Naive thymus-derived CD8-positive, alpha-beta T cell (primary cell): ENCODE measurements at regions of chr1 and their contacts with region 1.

Region 1: DNA sequence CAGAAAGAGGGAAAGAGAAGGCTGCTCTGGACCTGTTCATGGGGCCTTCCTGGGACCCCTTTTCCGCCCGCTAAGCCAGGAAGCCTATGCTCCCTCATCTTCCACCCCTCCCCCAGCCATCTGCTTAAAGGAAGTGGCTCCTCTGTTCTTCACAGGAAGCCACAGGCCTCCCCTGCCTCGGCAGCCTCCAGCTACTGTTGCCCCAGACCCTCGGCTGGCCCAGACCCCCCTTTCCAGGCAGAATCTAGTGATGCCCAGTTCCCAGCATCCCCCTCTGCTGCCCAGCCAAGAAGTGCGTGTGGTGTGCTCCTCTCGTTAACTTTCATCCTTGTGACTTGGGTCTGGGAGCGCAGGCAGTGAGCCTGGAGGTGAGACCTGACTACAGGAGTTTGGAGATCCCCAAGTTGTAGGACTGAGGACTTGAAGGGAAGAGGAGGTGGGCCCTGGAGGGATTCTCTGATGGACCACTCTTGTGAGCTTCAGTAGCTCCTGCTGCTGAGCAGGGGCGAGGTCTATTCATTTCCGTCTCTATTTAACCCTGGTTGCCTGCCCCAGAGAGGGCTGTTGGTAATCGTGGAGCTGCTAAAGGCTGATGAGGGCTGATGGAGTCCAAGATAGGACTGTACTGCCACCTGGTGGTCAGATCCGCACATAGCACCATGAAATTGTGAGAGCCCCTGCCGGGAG is 9.1 kb downstream of the IFI6 start:
- DNase-seq: peak; percentile 79 to 95 (median 90)
- ATAC-seq: peak; percentile 75
- H3K4me3 Mint-ChIP-seq: peak overlapping the region; percentile 76 to 92 (median 88)
- H3K27ac Mint-ChIP-seq: peak overlapping the region; percentile 90 to 100 (median 99)
- H3K4me1 Mint-ChIP-seq: peaks cover 36 to 58% (median 50%) of the 10 kb centered on the region in 4 donors
- H3K27me3 Mint-ChIP-seq: no peaks in the 10 kb centered on the region

Region 2: GRCh38 chr1:27603681-27604578 is 58.9 kb before region 1 on chr1 and contains the start of gene AHDC1:
- POLR2A ChIA-PET with region 1: interaction called, 263 read pairs
- DNase-seq: peak; percentile 85 to 95 (median 90)
- ATAC-seq: peak; percentile 85 to 87
- H3K4me3 Mint-ChIP-seq: peak within 1 kb of the TSS; percentile 89 to 96 (median 92)
- H3K27ac Mint-ChIP-seq: peak within 1 kb of the TSS; percentile 73 to 98 (median 91)
- H3K4me1 Mint-ChIP-seq: peaks cover 26 to 55% (median 37%) of the 10 kb centered on the region in 4 donors
- H3K27me3 Mint-ChIP-seq: no peaks in the 10 kb centered on the region
- polyA plus RNA-seq, gene AHDC1: 0.57 to 2.4 (median 1.0) TPM

Region 3: GRCh38 chr1:27624467-27625178 is 38.2 kb before region 1 on chr1:
- POLR2A ChIA-PET with region 1: interaction called, 263 read pairs
- DNase-seq: no peak
- ATAC-seq: peak; percentile 21 to 33
- H3K4me3 Mint-ChIP-seq: no peak overlapping the region
- H3K27ac Mint-ChIP-seq: no peak overlapping the region
- H3K4me1 Mint-ChIP-seq: peaks cover 20 to 46% (median 30%) of the 10 kb centered on the region in 4 donors
- H3K27me3 Mint-ChIP-seq: no peaks in the 10 kb centered on the region

Region 4: GRCh38 chr1:27632387-27633297 is 30.2 kb before region 1 on chr1:
- POLR2A ChIA-PET with region 1: interaction called, 17 read pairs
- DNase-seq: no peak
- ATAC-seq: peak; percentile 45 to 66
- H3K4me3 Mint-ChIP-seq: peak overlapping the region; percentile 57 to 85 (median 76)
- H3K27ac Mint-ChIP-seq: peak overlapping the region; percentile 23 to 92 (median 85)
- H3K4me1 Mint-ChIP-seq: peaks cover 41 to 81% (median 75%) of the 10 kb centered on the region in 4 donors
- H3K27me3 Mint-ChIP-seq: no peaks in the 10 kb centered on the region

Region 5: DNA sequence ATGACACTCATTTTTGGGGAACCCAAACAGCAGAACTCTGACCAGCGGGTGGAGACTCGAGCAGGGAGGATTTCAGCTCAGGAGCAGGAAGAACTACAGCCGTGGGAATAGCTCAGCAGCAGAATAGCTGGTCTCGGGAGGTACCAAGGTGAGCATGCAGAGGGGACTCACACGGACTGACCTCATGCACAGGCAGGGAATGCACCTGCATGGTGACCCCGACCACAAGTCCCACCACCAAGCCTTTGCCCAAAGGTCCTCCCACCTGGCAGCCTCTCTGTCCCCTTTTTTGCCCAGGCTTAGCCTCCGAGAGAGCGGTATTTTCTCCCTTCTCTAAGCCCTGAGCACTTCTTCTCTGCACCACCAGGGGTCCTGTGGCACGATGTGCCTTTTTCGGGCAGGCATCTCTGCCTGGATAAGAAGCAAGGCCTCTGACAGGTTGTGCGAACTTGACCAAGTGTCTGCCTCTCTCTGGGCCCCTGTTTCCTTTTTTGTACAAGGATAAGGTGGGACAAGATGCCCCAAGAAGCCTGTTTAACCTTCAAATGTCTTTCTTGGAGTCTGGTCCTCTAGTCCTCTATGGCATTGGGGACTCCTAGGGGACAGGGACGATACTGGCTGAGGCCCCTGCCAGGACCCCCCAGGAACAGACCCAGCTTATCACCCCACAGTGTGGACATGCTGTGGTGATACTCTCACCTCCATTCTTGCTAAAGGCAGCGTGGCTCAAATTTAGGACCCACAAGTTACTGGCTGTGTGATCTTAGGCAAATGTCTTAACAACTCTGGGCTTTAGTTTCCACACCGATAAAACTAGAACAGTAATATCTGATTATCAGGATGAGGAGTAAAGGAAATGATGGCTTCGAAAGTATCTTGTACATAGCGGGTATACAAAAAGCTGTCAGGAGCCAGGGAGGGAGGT is 18.9 kb before region 1 on chr1:
- POLR2A ChIA-PET with region 1: interaction called, 65 read pairs
- DNase-seq: peak; percentile 51 to 87 (median 68)
- ATAC-seq: peak; percentile 99 to 100
- H3K4me3 Mint-ChIP-seq: peak overlapping the region in 2 of 10 donors; percentile 8 to 27
- H3K27ac Mint-ChIP-seq: peak overlapping the region; percentile 25 to 89 (median 74)
- H3K4me1 Mint-ChIP-seq: peaks cover 14 to 30% (median 21%) of the 10 kb centered on the region in 4 donors
- H3K27me3 Mint-ChIP-seq: no peaks in the 10 kb centered on the region

Region 6: DNA sequence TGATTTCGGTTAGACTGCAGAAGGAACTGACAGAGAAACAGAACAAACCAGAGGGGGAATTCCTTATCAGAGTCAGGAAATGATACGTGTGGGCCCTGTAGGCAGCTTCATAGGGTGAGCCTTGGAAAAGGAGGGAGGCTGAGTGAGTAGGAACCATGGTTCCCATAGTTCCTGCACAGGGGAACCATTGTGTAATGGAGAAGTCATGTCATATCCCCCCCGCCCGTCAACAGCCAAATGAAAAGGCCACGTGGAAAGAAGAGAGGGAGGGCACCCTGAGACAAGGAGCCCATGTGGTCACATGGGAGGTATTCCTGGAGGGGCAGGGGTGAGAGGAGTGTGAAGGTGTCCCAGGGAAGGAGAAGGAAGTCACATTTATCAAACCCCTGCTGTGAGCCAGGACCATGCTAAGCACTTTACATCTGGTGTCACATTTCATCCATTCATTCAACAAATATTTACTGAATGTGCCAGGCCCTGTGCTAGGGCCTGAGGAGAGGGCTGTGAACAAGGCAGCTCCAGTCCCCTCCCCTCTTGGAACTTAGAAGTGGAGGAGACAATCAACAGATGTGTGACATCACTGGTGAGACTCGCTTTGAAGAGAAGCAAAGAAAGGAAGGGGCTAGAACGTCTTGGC is 12.2 kb before region 1 on chr1:
- POLR2A ChIA-PET with region 1: interaction called, 65 read pairs
- DNase-seq: no peak
- ATAC-seq: no peak
- H3K4me3 Mint-ChIP-seq: no peak overlapping the region
- H3K27ac Mint-ChIP-seq: peak overlapping the region in 9 of 10 donors; percentile 6 to 89 (median 72)
- H3K4me1 Mint-ChIP-seq: peaks cover 16 to 35% (median 20%) of the 10 kb centered on the region in 4 donors
- H3K27me3 Mint-ChIP-seq: no peaks in the 10 kb centered on the region